ENCODE measurements at regions of chr18 and their contacts with region 1.

Region 1: GRCh38 chr18:21740724-21741510 is at the start of gene MIB1:
- DNase-seq: peak; percentile 98
- ATAC-seq: peak; percentile 64
- H3K4me3 ChIP-seq: peak within 1 kb of the TSS; percentile 51 to 98 (median 94)
- H3K4me3 Mint-ChIP-seq: peak within 1 kb of the TSS; percentile 95
- H3K27ac ChIP-seq: peak within 1 kb of the TSS; percentile 86
- H3K27ac Mint-ChIP-seq: peak within 1 kb of the TSS; percentile 97
- H3K4me1 ChIP-seq: peaks cover 9 to 13% of the 10 kb centered on the region in 2 donors
- H3K4me1 Mint-ChIP-seq: peaks cover 30% of the 10 kb centered on the region
- H3K27me3 ChIP-seq: no peaks in the 10 kb centered on the region
- H3K27me3 Mint-ChIP-seq: no peaks in the 10 kb centered on the region
- CTCF ChIP-seq: no peak
- total RNA-seq, gene MIB1: 24.4 and 25.5 TPM in 2 replicates

Region 2: GRCh38 chr18:21489119-21489750 is 251.7 kb before region 1 on chr18:
- CTCF ChIA-PET with region 1: no interaction called
- POLR2A ChIA-PET with region 1: no interaction called
- intact Hi-C with region 1: no loop called
- DNase-seq: peak; percentile 43
- ATAC-seq: no peak
- H3K4me3 ChIP-seq: no peak overlapping the region
- H3K4me3 Mint-ChIP-seq: no peak overlapping the region
- H3K27ac ChIP-seq: no peak overlapping the region
- H3K27ac Mint-ChIP-seq: no peak overlapping the region
- H3K4me1 ChIP-seq: no peaks in the 10 kb centered on the region
- H3K4me1 Mint-ChIP-seq: no peaks in the 10 kb centered on the region
- H3K27me3 ChIP-seq: no peaks in the 10 kb centered on the region
- H3K27me3 Mint-ChIP-seq: peaks cover 2% of the 10 kb centered on the region
- CTCF ChIP-seq: peak; percentile 65

Region 3: DNA sequence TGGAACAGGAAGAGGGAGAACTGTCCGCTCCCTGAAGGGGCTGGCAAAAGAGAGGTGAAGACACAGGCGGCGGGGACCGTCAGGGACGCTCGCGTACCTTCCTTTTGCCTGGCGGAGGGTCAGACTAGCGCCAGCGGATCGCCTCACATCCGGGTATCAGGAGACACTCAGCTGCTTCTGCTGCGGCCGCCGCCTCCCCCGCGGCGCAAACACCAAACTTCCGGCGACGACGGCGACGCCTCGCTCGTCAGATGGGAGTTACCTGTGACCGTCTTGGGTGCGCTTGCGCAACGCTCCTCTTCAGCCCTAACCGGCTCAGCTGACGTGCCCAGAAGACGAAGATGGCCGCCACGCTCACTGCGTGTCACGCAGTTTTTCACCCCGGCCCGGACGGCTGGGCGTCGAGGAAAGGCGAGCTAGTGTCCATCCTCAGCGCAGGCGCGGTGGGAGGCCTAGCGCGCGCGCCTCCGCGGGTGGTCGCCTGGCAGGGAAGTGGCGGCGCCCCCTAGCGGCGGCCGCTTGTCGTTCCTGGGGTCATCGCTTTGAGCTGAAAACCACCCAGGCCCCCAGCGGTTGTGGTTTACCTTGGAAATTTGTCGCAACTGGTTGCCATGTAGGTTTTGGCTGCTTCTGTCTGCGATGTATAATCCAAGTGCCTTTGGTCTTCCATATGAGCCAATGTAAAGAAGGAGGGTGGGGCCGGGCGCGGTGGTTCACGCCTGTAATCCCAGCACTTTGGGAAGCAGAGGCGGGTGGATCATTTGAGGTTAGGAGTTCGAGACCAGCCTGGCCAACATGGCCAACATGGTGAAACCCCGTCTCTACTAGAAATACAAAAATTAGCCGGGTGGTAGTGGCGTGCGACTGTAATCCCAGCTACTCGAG is 140.1 kb before region 1 on chr18 and contains the start of gene ESCO1:
- CTCF ChIA-PET with region 1: interaction called, 10 read pairs
- POLR2A ChIA-PET with region 1: interaction called, 16 read pairs
- intact Hi-C with region 1: loop called (anchors 1 kb)
- DNase-seq: peak; percentile 99
- ATAC-seq: peak; percentile 79
- H3K4me3 ChIP-seq: peak within 1 kb of the TSS; percentile 66 to 99 (median 92)
- H3K4me3 Mint-ChIP-seq: peak within 1 kb of the TSS; percentile 99
- H3K27ac ChIP-seq: peak within 1 kb of the TSS; percentile 99
- H3K27ac Mint-ChIP-seq: peak within 1 kb of the TSS; percentile 100
- H3K4me1 ChIP-seq: peaks cover 37 to 39% of the 10 kb centered on the region in 2 donors
- H3K4me1 Mint-ChIP-seq: peaks cover 47% of the 10 kb centered on the region
- H3K27me3 ChIP-seq: no peaks in the 10 kb centered on the region
- H3K27me3 Mint-ChIP-seq: no peaks in the 10 kb centered on the region
- CTCF ChIP-seq: peak; percentile 99
- total RNA-seq, gene ESCO1: 30.0 and 31.2 TPM in 2 replicates

Region 4: GRCh38 chr18:21704603-21705364 is 36.1 kb before region 1 on chr18 and contains the start of gene ABHD3:
- CTCF ChIA-PET with region 1: interaction called, 5 read pairs
- POLR2A ChIA-PET with region 1: interaction called, 11 read pairs
- intact Hi-C with region 1: loop called (anchors 1 kb)
- DNase-seq: peak; percentile 93
- ATAC-seq: peak; percentile 93
- H3K4me3 ChIP-seq: peak within 1 kb of the TSS; percentile 66 to 87 (median 69)
- H3K4me3 Mint-ChIP-seq: peak within 1 kb of the TSS; percentile 98
- H3K27ac ChIP-seq: peak within 1 kb of the TSS; percentile 82 to 92
- H3K27ac Mint-ChIP-seq: peak within 1 kb of the TSS; percentile 95
- H3K4me1 ChIP-seq: peaks cover 10 to 11% of the 10 kb centered on the region in 2 donors
- H3K4me1 Mint-ChIP-seq: peaks cover 20% of the 10 kb centered on the region
- H3K27me3 ChIP-seq: no peaks in the 10 kb centered on the region
- H3K27me3 Mint-ChIP-seq: no peaks in the 10 kb centered on the region
- CTCF ChIP-seq: peak; percentile 58
- total RNA-seq, gene ABHD3: 27.6 and 32.8 TPM in 2 replicates

Region 5: GRCh38 chr18:22052405-22053105 is 311.6 kb after region 1 on chr18:
- CTCF ChIA-PET with region 1: no interaction called
- POLR2A ChIA-PET with region 1: no interaction called
- intact Hi-C with region 1: no loop called
- DNase-seq: no peak
- ATAC-seq: no peak
- H3K4me3 ChIP-seq: no peak overlapping the region
- H3K4me3 Mint-ChIP-seq: no peak overlapping the region
- H3K27ac ChIP-seq: no peak overlapping the region
- H3K27ac Mint-ChIP-seq: no peak overlapping the region
- H3K4me1 ChIP-seq: no peaks in the 10 kb centered on the region
- H3K4me1 Mint-ChIP-seq: no peaks in the 10 kb centered on the region
- H3K27me3 ChIP-seq: no peaks in the 10 kb centered on the region
- H3K27me3 Mint-ChIP-seq: no peaks in the 10 kb centered on the region
- CTCF ChIP-seq: no peak

Measured in B cell (primary cell).